Caki2 (cell line): ENCODE measurements at regions of chr1 and their contacts with region 1.

Region 1: GRCh38 chr1:29230553-29231378 is at the start of gene MECR:
- DNase-seq: peak; percentile 83
- total RNA-seq, gene MECR: 9.9 and 17.3 TPM in 2 replicates

Region 2: DNA sequence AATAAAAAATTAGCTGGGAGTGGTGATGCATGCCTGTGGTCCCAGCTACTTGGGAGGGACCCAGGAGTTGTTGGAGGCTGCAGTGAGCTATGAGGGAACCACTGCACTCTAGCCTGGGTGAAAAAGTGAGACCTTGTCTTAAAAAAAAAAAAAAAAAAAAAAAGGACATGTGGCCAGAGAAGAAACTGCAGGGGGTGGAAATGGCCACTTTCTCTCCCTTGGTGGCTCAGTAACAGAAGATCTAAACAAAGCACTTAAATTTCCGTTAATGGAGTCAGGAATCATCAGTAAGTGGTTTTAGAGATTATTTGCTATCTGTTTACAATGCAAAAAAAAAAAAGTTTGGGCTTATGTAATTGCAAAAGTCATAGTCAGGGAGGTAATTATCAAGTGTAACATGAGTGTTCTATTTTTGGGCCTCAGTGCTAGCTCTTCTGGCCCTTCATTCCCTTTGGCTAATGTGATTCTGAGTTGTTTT is 438.1 kb before region 1 on chr1:
- in situ Hi-C with region 1: no loop called
- DNase-seq: no peak

Region 3: DNA sequence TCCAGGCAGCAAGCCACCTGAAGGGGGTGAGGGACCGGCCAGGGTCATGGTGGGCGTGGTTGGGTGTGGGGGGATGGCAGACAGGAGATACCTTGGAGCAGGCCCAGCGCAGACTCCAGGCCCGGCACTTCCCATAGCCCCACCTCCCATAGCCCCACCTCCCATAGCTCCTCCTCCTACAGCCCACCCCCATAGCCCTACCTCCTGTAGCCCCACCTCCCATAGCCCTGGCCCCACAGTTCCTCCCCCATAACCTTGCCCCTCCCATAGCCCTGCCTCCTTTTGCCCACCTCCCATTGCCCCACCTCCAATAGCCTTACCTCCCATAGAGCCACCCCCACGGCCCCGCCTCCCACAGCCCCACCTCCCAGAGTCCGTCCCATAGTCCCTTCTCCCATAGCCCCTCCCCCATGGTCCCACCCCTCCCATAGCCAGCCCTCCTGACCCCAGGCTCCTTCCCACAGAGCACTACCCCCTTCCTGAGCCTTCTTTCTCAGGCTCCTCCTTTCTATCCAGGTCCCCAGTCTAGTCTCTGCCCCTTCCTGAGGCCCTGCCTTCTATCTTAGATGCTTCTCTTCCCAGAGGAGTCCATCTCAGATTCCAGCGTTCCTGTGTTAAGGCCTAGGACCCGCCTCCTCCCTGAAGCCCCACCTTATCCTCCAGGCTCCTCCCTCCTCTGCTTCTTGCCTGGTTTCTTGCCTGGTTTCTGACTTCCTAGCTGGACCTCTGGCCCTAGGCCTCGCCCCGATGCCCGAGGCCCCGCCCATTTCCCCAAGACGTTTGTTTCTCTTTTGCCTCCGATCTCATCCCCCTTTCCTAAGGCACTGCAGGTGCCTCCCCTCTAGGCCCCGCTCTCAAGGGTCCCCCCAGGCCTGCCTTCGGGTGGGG is 52.4 kb after region 1 on chr1:
- in situ Hi-C with region 1: no loop called
- DNase-seq: peak; percentile 97

Region 4: DNA sequence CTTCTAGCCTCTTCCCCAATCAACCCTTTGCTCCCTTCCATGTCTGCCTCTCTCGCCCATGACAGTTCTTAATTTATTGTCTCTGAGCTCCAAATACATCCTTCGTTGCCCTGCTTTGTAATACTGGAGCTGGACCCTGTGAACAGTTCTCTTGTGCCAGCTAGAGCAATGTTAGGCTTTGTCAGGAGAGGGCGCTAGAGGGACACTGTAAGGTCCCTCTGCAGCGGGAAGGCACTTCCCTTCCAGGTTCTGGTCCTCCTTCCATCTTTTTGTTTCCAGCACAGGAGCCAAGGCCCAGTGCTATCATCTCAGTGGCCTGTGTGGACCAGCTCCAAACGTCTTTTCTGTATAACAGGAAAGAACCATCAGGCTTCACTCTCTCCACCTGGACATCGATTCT is 101.4 kb after region 1 on chr1:
- in situ Hi-C with region 1: no loop called
- DNase-seq: no peak

Region 5: DNA sequence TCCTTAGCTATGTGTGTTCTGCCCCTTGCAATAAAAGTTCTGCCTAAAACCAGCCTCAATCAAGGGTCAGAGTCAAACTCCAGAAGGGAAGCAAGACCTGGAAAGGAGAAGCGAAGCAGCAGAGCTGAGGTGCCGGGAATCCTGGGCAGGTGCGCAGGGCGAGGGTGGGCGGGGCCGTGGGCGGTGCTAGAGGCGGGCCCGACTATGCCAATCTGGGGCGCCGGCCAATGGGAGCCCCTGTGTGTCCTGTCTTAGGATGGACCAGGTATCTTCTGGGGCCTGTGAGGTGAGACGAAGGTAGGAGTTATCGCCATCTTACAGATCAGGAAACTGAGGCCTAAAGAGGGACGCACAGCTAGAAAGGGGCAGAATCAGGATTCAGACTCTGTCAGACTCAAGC is 125.9 kb after region 1 on chr1:
- in situ Hi-C with region 1: loop called (anchors 25 kb)
- DNase-seq: no peak

Region 6: GRCh38 chr1:29579821-29580425 is 349.2 kb after region 1 on chr1:
- in situ Hi-C with region 1: no loop called
- DNase-seq: peak; percentile 37